ENCODE measurements at regions of chr12 and their contacts with region 1.

Region 1: GRCh38 chr12:26130728-26131127 is 5.9 kb upstream of the BHLHE41 start:
- DNase-seq: no peak
- H3K4me3 ChIP-seq: no peak overlapping the region
- H3K27ac ChIP-seq: no peak overlapping the region
- H3K4me1 ChIP-seq: no peaks in the 10 kb centered on the region
- H3K27me3 ChIP-seq: no peaks in the 10 kb centered on the region
- CTCF ChIP-seq: no peak

Region 2: DNA sequence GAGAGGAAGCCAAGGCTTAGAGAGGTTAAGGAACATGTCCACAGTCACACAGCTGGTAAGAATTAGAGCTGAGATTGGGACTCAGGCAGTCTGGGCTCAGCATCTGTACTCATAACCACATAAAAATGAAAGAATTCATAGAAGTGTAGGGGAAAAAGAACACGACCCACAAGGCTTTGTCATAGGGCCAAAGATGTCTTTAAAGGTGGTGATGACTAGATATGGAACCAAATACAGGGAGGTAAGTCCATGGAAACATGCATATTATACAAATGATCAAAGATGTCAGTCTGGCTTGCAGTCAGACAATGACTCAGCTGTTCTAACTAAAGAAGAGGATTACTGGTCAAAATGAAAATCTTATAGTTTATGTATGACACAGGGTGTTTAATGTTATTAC is 57.4 kb after region 1 on chr12:
- intact Hi-C with region 1: loop called (anchors 5 kb)
- DNase-seq: no peak
- H3K4me3 ChIP-seq: no peak overlapping the region
- H3K27ac ChIP-seq: no peak overlapping the region
- H3K4me1 ChIP-seq: no peaks in the 10 kb centered on the region
- H3K27me3 ChIP-seq: no peaks in the 10 kb centered on the region
- CTCF ChIP-seq: no peak

Region 3: GRCh38 chr12:26198742-26199141 is 68.0 kb after region 1 on chr12:
- intact Hi-C with region 1: no loop called
- DNase-seq: no peak
- H3K4me3 ChIP-seq: no peak overlapping the region
- H3K27ac ChIP-seq: no peak overlapping the region
- H3K4me1 ChIP-seq: no peaks in the 10 kb centered on the region
- H3K27me3 ChIP-seq: no peaks in the 10 kb centered on the region
- CTCF ChIP-seq: no peak

Measured in colonic mucosa (tissue), 4 donors.